Thyroid gland (tissue), 4 donors: ENCODE measurements at regions of chr11 and their contacts with region 1.

Region 1: GRCh38 chr11:910589-911195 is at the start of gene CHID1:
- DNase-seq: peak; percentile 85 to 89
- H3K4me3 ChIP-seq: peak within 1 kb of the TSS; percentile 80 to 95 (median 89)
- H3K27ac ChIP-seq: peak within 1 kb of the TSS; percentile 78 to 86 (median 85)
- H3K4me1 ChIP-seq: peaks cover 13 to 16% of the 10 kb centered on the region in 2 donors
- H3K27me3 ChIP-seq: no peaks in the 10 kb centered on the region
- CTCF ChIP-seq: peak in 2 of 6 experiments; percentile 3 to 20
- POLR2A ChIP-seq: peak in 1 of 2 donors; percentile 55
- total RNA-seq, gene CHID1: 75.0 to 144 (median 93.8) TPM

Region 2: GRCh38 chr11:662689-663274 is 247.9 kb before region 1 on chr11:
- intact Hi-C with region 1: no loop called
- DNase-seq: peak; percentile 66 to 74
- H3K4me3 ChIP-seq: no peak overlapping the region
- H3K27ac ChIP-seq: no peak overlapping the region
- H3K4me1 ChIP-seq: peaks cover 0 to 3% of the 10 kb centered on the region in 2 donors
- H3K27me3 ChIP-seq: no peaks in the 10 kb centered on the region
- CTCF ChIP-seq: peak; percentile 28 to 81 (median 68)
- POLR2A ChIP-seq: no peak

Region 3: DNA sequence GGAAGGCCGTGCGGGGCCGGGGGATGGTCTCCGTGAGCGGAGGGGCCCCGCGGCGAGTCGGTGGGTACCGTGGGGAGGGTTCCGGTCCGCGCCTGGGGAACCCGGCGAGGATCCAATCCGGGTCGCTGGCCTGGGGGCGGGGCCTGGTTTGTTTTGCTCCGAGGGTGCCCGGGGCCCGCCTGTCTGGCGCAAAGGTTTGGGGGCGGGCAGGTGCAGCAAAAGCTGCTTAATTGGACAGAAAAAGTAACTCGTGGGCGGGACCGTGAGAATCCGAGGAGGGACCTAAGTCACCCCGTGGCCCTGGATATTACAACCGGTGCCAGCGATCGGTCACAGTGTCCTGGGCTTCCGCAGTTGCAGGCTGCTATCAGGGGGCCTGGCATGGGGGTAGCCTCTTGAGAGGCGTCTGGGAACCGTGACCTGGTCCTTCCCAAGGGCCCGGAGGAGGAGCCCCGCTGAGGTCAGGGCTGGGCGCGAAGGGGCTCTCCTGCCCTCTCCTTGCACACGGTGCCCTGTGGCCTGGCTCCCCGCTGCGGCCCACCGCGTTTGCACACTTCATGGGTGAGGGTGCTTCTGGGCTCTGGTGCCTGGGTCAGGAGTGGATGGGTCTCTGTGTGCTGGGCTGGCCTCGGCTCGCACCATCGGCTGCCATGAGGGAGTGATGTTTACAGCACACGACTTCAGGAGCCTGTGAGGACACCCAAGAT is 90.6 kb before region 1 on chr11:
- intact Hi-C with region 1: loop called (anchors 10 kb)
- DNase-seq: peak; percentile 98
- H3K4me3 ChIP-seq: peak overlapping the region; percentile 38 to 100 (median 89)
- H3K27ac ChIP-seq: peak overlapping the region; percentile 78 to 99 (median 98)
- H3K4me1 ChIP-seq: peaks cover 21 to 24% of the 10 kb centered on the region in 2 donors
- H3K27me3 ChIP-seq: no peaks in the 10 kb centered on the region
- CTCF ChIP-seq: no peak
- POLR2A ChIP-seq: peak in 1 of 2 donors; percentile 36

Region 4: DNA sequence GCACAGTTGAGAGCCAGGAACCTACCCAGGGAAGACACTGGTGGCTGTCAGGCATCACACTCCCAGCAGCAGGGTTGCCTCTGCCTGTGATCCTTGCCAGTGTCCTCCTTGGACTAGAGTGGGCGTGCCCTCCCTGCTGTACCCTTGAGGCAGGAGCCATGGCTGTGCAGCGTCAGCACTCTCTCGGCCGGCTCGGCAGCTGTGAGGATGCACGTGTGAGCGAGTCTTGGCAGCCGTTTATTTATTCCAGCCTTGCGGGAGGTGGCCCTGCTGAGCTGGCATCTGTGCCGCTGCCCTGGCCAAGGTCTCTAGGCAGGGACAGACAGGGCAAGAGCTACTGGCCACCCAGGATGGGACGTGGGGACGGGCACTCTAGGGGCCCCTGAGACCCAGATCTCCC is 34.2 kb before region 1 on chr11:
- intact Hi-C with region 1: no loop called
- DNase-seq: peak in 1 of 2 donors; percentile 41
- H3K4me3 ChIP-seq: no peak overlapping the region
- H3K27ac ChIP-seq: no peak overlapping the region
- H3K4me1 ChIP-seq: no peaks in the 10 kb centered on the region
- H3K27me3 ChIP-seq: no peaks in the 10 kb centered on the region
- CTCF ChIP-seq: no peak
- POLR2A ChIP-seq: no peak

Region 5: GRCh38 chr11:965206-965775 is 54.6 kb after region 1 on chr11:
- intact Hi-C with region 1: no loop called
- DNase-seq: no peak
- H3K4me3 ChIP-seq: no peak overlapping the region
- H3K27ac ChIP-seq: no peak overlapping the region
- H3K4me1 ChIP-seq: peaks cover 9 to 10% of the 10 kb centered on the region in 2 donors
- H3K27me3 ChIP-seq: no peaks in the 10 kb centered on the region
- CTCF ChIP-seq: no peak
- POLR2A ChIP-seq: no peak

Region 6: DNA sequence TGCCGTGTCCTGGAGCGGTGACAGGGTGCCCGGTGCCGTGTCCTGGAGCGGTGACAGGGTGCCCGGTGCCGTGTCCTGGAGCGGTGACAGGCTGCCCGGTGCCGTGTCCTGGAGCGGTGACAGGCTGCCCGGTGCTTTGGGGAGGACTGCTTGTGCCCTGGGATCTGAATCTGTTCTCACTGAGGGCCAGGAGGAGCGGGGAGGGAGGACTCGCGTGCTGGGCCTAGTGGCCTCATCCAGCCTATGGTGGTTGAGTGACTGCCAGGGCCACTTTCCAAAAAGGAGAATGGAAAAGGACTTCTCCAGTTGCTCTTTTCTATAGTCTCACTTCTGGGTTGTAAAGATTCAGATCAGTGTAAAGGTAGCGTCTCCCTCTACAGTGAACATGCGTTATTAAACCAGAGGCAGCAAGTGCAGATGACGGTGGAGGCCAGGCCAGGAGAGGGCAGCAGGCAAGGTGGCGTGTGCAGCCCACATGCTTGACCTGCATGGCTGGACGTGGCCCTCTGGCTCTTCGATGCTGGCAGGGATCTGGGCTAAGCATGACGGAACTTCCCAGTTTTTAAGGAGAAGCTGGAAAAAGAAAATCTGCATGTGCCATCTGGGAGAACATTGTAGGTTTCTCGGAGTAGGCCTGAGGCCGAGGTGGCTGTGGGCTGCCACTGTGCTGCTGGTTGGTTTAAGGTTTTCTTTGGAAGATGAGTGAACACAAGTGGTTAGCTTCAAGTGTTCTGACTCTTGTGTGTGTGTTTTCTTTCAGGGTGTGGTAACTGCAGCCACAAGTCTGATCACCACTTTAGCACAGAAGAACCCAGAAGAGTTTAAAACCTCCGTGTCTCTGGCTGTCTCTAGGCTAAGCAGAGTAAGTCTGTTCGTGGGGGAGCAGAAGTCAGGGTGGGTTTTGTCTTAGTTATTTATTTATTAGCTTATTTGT is 70.0 kb after region 1 on chr11:
- intact Hi-C with region 1: no loop called
- DNase-seq: peak; percentile 66 to 69
- H3K4me3 ChIP-seq: no peak overlapping the region
- H3K27ac ChIP-seq: peak overlapping the region; percentile 44 to 51 (median 50)
- H3K4me1 ChIP-seq: peaks cover 22 to 30% of the 10 kb centered on the region in 2 donors
- H3K27me3 ChIP-seq: no peaks in the 10 kb centered on the region
- CTCF ChIP-seq: peak in 3 of 6 experiments; percentile 30 to 41 (median 36)
- POLR2A ChIP-seq: no peak